Uterus (tissue), 4 donors: ENCODE measurements at regions of chr11 and their contacts with region 1.

Region 1: GRCh38 chr11:122101625-122102291 is 14.3 kb downstream of the BLID start:
- DNase-seq: peak; percentile 74 to 81
- H3K4me3 ChIP-seq: peak overlapping the region; percentile 57 to 64
- H3K27ac ChIP-seq: peak overlapping the region; percentile 92 to 95
- H3K4me1 ChIP-seq: no peaks in the 10 kb centered on the region
- H3K27me3 ChIP-seq: no peaks in the 10 kb centered on the region
- CTCF ChIP-seq: peak; percentile 56 to 79 (median 72)
- POLR2A ChIP-seq: peak; percentile 3 to 11

Region 2: DNA sequence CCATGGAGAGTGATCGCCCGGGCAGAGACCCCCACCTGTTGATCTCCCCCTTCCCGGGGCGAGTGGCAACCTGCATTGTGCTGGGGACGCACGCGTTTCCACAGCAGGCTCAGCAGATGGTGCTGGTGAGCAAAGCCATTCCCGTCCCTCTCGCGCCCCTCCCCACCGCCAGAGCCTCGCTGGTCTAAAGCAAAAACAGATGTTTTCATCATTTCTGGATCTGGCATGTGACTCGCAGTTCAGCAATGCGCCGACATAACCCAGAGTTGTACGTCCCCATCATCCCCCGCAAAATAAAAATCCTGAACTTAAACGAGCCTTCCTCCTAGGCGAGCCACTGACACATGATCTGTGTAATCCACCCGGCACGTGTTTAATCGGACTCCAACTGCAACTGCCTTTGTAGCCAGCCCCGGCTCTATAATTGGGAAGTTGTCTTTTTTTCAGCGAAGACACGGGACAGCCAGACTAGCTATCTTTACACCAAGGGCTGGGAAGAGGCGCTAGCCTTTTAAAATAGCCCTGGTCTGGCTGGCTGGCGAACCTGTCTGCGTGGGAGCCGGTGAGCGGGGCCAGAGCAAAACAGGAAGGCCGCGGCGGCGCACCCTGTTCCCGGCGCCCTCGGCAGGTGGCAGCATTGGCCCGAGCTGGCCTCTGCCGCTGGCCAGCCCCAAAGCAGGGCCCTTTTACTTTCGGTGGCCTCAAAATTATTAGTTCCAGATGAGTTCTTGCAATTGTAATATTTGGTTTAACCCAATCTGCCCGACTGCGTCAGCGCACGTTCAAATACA is 446.0 kb before region 1 on chr11:
- intact Hi-C with region 1: loop called (anchors 5 kb)
- DNase-seq: peak; percentile 95
- H3K4me3 ChIP-seq: peak overlapping the region; percentile 18 to 44
- H3K27ac ChIP-seq: peak overlapping the region; percentile 96 to 97
- H3K4me1 ChIP-seq: peaks cover 0 to 7% of the 10 kb centered on the region in 2 donors
- H3K27me3 ChIP-seq: no peaks in the 10 kb centered on the region
- CTCF ChIP-seq: peak; percentile 80 to 94 (median 89)
- POLR2A ChIP-seq: peak in 1 of 2 donors; percentile 18